IMR-90 (cell line): ENCODE measurements at regions of chr4 and their contacts with region 1.

Region 1: DNA sequence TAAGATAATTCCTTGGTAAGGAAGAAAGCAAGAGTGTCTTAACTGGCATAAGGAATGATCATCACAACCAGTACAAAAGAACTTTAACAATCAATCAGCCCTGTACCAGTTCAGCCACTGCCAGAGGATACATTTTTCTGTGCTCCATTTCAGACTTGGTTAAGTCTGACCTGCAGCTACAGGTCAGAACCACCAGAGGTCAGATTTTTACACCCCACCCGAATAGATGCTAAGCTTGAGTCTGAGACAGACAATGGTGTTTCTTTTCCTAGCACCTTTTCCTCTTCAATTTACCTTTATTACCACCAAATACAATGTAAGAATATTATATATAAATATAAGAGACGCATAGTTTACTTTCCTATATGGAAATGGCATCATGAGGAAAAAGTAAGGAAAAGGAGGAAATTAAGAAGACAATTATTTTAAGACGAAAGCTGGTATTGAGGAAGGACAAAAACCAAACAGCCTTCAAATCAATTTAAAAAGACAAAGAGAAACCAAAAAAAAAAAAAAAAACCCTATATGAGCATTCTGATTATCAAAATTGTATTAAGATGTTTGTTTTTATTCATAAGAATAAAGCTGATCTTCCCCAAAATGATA is 215.3 kb upstream of the TTC29 start:
- DNase-seq: peak; percentile 71
- ATAC-seq: peak; percentile 84
- H3K4me3 ChIP-seq: no peak overlapping the region
- H3K27ac ChIP-seq: no peak overlapping the region
- H3K4me1 ChIP-seq: 0 out of 2 replicates have a peak, but pooled peaks cover 2% of the 10 kb centered on the region
- H3K27me3 ChIP-seq: no peaks in the 10 kb centered on the region
- CTCF ChIP-seq: peak; percentile 78
- POLR2A ChIP-seq: no peak
- RAD21 ChIP-seq: peak; percentile 84

Region 2: GRCh38 chr4:147111033-147111367 is 50.0 kb before region 1 on chr4:
- CTCF ChIA-PET with region 1: interaction called, 3 read pairs
- POLR2A ChIA-PET with region 1: no interaction called
- dilution Hi-C with region 1: no loop called
- in situ Hi-C with region 1: no loop called
- intact Hi-C with region 1: loop called (anchors 5 kb)
- DNase-seq: peak; percentile 47
- ATAC-seq: peak; percentile 82
- H3K4me3 ChIP-seq: no peak overlapping the region
- H3K27ac ChIP-seq: no peak overlapping the region
- H3K4me1 ChIP-seq: no peaks in the 10 kb centered on the region
- H3K27me3 ChIP-seq: no peaks in the 10 kb centered on the region
- CTCF ChIP-seq: peak; percentile 58
- POLR2A ChIP-seq: no peak
- RAD21 ChIP-seq: peak; percentile 66

Region 3: GRCh38 chr4:147361726-147362125 is 200.7 kb after region 1 on chr4:
- CTCF ChIA-PET with region 1: interaction called, 3 read pairs
- POLR2A ChIA-PET with region 1: no interaction called
- dilution Hi-C with region 1: no loop called
- in situ Hi-C with region 1: no loop called
- intact Hi-C with region 1: loop called (anchors 2 kb)
- DNase-seq: peak; percentile 92
- ATAC-seq: peak; percentile 87
- H3K4me3 ChIP-seq: no peak overlapping the region
- H3K27ac ChIP-seq: peak overlapping the region; percentile 82
- H3K4me1 ChIP-seq: peaks cover 28% of the 10 kb centered on the region
- H3K27me3 ChIP-seq: no peaks in the 10 kb centered on the region
- CTCF ChIP-seq: no peak
- POLR2A ChIP-seq: no peak
- RAD21 ChIP-seq: no peak

Region 4: DNA sequence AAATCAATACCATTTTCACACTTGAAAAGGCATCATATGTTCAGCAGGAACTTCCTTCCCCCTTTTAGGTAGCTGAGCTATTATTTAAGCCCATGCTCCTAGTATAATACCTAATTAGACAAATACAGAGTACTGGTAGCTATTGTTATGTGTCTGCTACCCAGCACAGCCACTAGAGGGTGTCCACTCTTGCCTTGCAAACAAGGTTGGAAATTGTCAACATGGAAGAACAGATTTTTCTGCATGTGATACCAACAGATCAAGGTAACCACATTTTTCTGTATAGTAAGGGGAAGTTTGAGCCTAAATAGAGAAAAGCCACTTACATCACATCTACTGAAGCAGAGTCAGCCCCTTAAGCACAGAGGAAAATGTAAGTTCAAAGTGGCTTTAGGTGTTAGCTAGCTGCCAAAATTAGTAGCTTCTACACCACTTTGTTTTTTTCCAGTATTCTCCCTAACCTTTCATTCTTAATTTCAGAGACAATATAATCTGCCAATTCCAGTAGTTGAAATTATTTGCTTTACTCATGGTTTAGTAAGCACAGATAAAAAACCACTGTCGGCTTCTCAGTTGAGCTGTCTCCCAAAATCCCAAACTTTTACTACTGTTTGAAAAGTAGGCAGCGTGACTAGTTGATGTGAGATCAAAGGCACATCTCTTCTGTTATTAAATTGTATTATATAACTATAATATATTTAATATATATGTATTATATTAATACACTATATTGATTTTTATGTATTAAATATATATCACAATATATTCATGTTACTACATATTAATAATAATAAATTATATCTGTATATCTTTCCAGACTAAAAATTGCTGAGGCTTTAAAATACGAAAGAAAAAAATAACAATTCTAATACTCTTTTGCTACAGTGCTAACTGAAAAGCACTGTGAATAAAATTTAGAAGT is 358.1 kb after region 1 on chr4:
- CTCF ChIA-PET with region 1: interaction called, 12 read pairs
- POLR2A ChIA-PET with region 1: no interaction called
- dilution Hi-C with region 1: no loop called
- in situ Hi-C with region 1: no loop called
- intact Hi-C with region 1: loop called (anchors 2 kb)
- DNase-seq: peak; percentile 86
- ATAC-seq: peak; percentile 89
- H3K4me3 ChIP-seq: no peak overlapping the region
- H3K27ac ChIP-seq: no peak overlapping the region
- H3K4me1 ChIP-seq: no peaks in the 10 kb centered on the region; the same call in 1 of the 2 replicates
- H3K27me3 ChIP-seq: no peaks in the 10 kb centered on the region
- CTCF ChIP-seq: peak; percentile 85
- POLR2A ChIP-seq: no peak
- RAD21 ChIP-seq: peak; percentile 88